Body of pancreas (tissue), 4 donors: ENCODE measurements at regions of chr18 and their contacts with region 1.

Region 1: GRCh38 chr18:35756506-35757117 is 175.1 kb downstream of the GALNT1 start:
- DNase-seq: peak; percentile 54 to 69 (median 60)
- ATAC-seq: peak; percentile 66
- H3K4me3 ChIP-seq: no peak overlapping the region
- H3K27ac ChIP-seq: no peak overlapping the region
- H3K4me1 ChIP-seq: no peaks in the 10 kb centered on the region
- H3K27me3 ChIP-seq: no peaks in the 10 kb centered on the region
- CTCF ChIP-seq: peak; percentile 53 to 78 (median 75)
- POLR2A ChIP-seq: no peak

Region 2: DNA sequence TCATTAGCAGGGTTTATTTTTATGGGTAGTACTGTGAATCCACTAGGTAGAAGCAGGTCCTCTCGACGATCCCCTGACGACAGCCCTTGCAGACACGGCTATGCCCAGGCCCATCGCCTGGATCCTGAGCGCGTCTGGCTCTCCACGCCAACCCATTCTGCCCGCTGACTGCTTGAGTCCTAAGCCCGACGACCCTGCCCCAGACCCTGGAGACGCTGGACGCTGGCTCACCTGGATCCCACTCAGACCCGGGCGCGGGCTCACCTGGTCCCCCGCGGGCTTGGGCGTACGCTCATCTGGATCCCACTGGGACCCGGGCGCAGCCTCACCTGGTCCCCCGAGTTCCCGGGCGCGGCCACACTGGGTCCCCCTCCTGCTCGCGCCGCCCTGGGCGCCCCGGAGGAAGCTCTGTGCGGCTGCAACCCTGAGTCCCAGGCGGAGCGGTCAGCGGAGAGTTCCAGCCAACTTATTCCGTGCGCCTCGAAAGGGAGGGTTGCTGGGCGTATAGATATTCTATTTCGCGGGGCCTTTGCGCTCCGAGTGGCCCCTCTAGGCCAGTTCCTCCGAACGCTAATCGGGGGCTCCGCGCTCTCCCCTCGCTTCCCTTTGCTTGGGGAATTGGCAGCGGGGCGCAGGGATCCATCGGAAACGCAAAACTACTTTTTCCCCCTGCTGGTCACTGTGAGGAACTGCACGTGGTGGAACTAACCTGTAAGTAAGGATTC is 193.5 kb after region 1 on chr18:
- intact Hi-C with region 1: loop called (anchors 10 kb)
- DNase-seq: peak; percentile 44 to 65 (median 56)
- ATAC-seq: peak; percentile 89
- H3K4me3 ChIP-seq: peak overlapping the region in 1 of 2 donors; percentile 51
- H3K27ac ChIP-seq: no peak overlapping the region
- H3K4me1 ChIP-seq: peaks cover 9% of the 10 kb centered on the region
- H3K27me3 ChIP-seq: no peaks in the 10 kb centered on the region
- CTCF ChIP-seq: peak; percentile 76 to 92 (median 85)
- POLR2A ChIP-seq: no peak